Left colon (tissue), 2 donors: ENCODE measurements at regions of chr7 and their contacts with region 1.

Region 1: DNA sequence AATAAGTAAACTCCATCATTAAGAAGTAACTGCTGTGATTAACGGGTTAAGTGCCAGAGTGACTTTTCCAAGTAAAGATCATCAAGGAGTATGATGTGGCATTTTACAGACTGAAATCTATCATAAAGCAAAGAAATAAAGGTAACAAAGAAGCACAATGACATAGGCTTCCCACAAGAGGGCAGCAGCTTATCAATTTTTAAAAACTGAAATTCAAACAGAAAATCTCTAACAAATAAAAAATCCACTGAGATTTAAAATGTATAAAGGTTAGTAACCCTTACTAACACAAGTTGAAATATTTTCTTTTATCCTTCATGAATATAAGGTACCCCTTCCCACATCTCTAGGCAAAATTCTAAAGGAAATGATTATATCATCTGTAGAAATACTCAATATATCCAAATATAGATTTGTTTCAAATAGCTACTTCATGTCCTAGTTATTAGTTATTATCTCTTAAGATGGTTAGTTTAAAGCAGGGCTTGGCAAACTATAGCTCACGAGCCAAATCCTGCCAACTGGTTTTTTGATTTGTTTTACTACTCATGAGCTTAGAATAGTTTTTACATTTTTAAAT is 29.2 kb downstream of the FAM3C start:
- DNase-seq: no peak
- ATAC-seq: peak; percentile 31

Region 2: DNA sequence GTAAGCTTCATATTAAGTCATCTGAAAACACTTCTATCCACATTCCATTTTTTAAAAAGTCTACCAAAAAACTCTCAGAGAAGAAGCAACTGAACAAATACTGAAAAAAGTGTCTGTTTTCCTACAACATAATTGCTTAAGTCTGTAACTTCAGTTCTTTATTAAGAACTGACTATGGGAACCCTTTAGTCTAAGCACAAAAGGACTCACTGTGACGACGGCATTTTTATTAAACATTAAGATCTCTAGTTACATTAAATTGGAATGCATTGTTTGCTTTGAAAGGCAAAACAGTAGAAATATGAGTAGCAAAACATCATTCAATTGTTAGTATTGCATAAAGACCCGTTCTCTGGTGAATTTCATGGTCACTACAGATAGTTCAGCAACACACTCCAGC is 35.0 kb after region 1 on chr7:
- intact Hi-C with region 1: no loop called
- DNase-seq: no peak
- ATAC-seq: no peak

Region 3: DNA sequence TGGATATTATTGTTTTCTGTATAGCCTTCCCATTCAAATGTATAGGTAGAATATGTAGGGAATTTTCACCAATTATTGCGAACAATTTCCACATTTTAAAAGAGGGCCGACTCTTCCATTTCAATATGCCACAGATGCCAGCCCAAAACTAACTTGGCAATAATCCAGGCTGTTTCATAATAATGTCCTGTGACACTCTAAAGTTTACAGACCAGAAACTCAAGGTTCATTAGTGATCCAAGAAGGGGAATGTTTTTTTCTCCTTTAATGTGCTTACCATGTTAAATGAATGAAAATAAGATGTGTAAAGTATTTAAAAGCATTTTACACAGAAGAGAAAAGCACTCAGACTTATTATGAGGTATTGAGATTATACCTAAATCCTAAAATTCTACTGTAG is 92.2 kb after region 1 on chr7:
- intact Hi-C with region 1: no loop called
- DNase-seq: no peak
- ATAC-seq: no peak

Region 4: DNA sequence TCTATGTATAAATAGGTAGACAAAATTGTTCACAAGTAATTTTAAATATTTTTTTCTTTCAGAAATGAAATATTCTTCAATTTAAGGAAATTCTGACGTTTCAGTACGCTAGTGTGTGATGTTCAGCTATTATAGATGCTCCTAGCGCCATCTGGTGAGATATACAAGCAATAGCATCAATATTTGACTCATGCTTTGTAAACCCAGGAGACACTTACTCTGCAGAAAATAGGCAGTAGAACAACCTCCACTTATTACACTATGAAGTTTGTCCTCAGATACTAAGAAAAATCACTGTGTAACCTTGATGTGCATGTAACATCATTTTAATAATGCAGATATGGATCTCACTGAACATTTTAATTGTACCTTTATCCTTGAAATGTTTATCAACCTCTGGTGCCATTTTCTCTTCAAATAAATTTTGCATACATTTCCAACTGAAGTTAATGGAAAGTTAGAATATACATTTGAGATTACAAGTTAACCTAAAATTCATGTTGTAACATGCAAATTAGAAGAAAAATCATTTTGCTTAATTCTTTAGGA is 180.7 kb after region 1 on chr7:
- intact Hi-C with region 1: loop called (anchors 5 to 10 kb)
- DNase-seq: no peak
- ATAC-seq: peak; percentile 93

Region 5: DNA sequence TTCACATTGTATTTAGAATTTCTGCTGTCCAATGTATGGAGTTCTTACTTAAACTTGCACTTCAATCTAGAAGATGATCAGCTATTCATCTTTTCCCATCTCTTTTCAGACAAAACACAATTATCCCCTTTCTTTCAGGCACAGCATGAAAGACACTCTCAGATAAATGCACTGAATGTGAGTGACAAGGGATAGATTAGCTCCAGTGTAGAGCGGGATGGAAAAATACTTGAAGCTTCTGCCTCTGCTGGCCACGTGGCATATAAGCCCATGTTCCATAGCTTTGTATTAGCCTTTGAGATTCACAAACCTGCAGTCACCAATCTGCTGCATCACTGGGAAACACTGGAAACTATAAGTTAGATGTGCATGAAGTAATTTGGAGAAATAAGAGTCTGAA is 191.3 kb after region 1 on chr7:
- intact Hi-C with region 1: loop called in 1 of 2 experiments (anchors 10 kb)
- DNase-seq: no peak
- ATAC-seq: no peak